Endothelial cell of umbilical vein (primary cell): ENCODE measurements at regions of chr14 and their contacts with region 1.

Region 1: DNA sequence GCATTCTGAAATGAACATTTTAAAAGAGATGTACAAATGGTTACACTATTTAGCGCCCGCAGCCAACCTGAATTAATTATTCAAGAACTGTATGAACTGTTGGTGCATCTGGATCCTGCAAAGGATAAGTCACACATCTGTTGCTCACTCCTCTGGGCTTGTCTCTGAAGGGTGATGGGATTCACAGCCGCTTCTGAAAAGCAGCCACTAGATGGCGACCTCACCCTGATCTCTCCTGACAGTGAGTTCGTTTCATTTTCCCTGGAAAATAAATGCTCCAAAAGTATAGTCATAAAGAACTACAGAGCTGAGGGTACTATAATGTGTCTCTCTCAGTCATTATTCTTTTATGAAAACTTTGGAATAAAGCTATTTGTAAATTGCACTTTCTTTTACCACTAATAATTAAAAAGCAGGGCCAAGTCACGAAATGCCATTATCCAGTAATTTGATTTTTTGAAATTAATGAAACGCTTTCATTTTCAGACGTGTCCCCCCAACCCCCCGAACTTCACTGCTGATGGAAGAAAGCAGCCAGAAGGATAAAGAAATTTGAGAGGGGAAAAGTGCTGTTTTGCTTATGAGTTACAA is 789.6 kb downstream of the NRXN3 start:
- DNase-seq: peak; percentile 74
- H3K4me3 ChIP-seq: no peak overlapping the region
- H3K27ac ChIP-seq: no peak overlapping the region
- H3K4me1 ChIP-seq: peaks cover 12% of the 10 kb centered on the region
- H3K27me3 ChIP-seq: no peaks in the 10 kb centered on the region
- CTCF ChIP-seq: peak; percentile 84 to 87
- POLR2A ChIP-seq: no peak

Region 2: DNA sequence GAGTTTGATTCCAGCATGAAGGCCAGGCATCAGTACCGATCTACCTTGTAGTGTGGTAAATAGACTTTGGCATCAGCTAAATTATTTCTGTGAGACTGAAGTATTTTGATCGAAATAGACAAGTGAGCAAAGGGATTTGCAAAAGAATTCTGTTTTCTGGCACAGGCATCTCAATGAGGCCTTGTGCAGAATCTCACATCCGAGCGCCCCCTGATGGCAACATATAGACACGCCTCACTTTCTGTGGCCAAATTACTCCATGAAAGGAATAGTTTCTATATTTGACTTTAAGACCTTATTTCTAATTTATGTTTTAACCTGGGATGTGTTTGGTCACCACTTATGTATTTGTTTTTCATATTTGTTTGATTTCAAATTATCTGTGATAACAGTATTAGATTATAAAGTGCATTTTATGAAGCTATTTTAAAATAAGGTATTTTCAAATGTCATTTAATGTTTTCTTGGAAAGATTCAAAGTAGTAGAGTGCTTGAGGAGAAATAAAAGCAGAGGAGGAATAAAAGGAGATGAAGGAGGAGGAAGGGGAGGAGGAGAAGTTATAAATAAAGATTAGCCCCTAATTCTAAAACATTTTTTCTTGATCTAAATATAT is 57.7 kb before region 1 on chr14:
- CTCF ChIA-PET with region 1: no interaction called
- POLR2A ChIA-PET with region 1: no interaction called
- dilution Hi-C with region 1: no loop called
- intact Hi-C with region 1: no loop called
- DNase-seq: peak; percentile 44
- H3K4me3 ChIP-seq: no peak overlapping the region
- H3K27ac ChIP-seq: no peak overlapping the region
- H3K4me1 ChIP-seq: no peaks in the 10 kb centered on the region
- H3K27me3 ChIP-seq: peaks cover 6 to 20% of the 10 kb centered on the region in 2 experiments
- CTCF ChIP-seq: peak; percentile 77
- POLR2A ChIP-seq: no peak

Region 3: GRCh38 chr14:78974691-78975090 is 14.9 kb after region 1 on chr14:
- CTCF ChIA-PET with region 1: interaction called, 18 read pairs
- POLR2A ChIA-PET with region 1: no interaction called
- dilution Hi-C with region 1: no loop called
- intact Hi-C with region 1: no loop called
- DNase-seq: peak; percentile 88
- H3K4me3 ChIP-seq: no peak overlapping the region
- H3K27ac ChIP-seq: peak overlapping the region; percentile 84
- H3K4me1 ChIP-seq: peaks cover 25% of the 10 kb centered on the region
- H3K27me3 ChIP-seq: no peaks in the 10 kb centered on the region
- CTCF ChIP-seq: no peak
- POLR2A ChIP-seq: no peak

Region 4: DNA sequence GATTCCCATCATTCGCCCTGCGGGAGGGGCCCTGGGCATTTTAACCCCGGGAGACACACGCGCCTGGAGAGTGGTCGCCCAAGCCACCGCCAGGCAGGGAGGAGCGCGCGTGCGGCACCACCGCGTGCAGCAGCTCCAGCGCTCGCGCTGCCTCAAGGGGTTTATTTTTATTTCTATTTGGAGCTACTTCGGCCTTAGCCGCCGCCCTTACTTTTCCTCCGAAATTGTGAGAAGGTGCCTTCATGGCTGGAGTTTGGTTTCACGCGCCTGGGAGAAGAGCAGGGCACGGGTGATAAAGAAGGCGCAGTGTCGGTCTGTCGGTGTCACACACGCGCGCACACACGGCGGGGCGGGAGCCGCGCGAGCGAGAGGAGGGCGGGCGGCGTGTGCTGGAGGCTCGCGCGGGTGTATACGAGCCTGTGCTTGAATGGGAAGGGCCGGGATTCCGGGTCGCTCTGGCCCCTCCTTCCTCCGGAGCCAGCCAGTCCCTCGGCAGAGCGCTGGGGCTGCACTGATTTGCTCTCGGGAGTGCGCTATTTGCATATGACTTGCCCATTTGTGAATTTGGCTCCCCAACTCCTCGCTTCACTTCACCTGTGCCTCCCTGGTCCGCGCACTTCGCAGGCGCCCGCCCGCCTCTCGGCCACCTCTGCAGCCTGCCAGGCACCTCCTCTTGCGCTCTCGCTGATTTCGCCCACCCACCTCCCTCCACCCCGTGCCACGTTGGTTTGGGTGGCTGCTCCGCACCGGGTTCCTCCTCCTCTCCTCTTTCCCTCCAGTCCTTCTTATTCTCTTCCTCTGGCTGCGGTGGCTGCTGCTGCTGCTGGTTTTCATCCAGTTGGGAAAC is 319.3 kb after region 1 on chr14:
- CTCF ChIA-PET with region 1: no interaction called
- POLR2A ChIA-PET with region 1: no interaction called
- dilution Hi-C with region 1: no loop called
- intact Hi-C with region 1: loop called (anchors 2 kb)
- DNase-seq: peak; percentile 83
- H3K4me3 ChIP-seq: peak overlapping the region; percentile 33 to 62 (median 34)
- H3K27ac ChIP-seq: no peak overlapping the region
- H3K4me1 ChIP-seq: peaks cover 7% of the 10 kb centered on the region
- H3K27me3 ChIP-seq: peaks cover 16 to 33% of the 10 kb centered on the region in 2 experiments
- CTCF ChIP-seq: no peak
- POLR2A ChIP-seq: no peak

Region 5: DNA sequence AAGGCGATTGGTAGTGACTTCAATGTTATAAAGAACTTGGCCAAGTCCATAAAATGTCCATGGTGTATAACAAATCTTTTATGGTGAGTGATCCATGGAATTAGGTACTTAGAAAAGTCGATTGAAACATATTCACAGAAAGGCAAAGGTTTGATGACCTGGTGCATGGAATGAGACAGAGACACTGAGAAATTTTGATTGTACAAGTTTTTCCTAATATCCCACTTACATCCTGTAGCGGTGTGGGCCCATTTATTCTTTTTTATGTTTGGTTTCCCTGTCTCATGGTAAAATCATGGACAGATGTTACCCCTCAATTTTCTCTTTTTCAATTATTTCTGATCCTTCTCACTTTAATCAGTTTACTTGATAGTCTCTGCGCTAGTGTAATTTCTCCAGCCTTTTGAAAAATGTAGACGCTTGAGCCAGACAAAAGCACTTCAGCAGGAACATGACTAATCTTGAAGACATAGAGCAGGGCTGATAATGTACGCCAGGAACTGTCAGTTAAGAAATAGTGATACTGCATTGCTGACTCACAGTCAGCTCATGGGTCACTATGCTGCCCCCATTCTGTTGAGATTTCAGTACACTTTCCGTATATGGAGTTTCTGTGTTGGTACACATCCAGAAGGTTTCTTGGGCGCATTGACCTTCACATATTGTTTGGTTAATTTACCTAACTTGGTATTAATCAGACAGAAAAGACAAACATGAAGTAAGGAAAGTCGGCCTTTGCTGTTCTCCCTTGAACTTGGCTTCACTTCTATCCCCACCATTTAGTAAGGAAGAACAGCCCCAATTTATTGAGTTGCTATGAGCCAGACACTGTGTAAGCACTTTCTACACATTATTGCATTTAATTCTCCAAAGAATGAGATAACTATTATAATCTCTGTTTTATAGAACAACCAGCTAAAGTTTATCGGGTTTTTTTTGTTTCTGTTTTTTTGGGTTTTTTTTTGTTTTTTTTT is 409.9 kb after region 1 on chr14:
- CTCF ChIA-PET with region 1: no interaction called
- POLR2A ChIA-PET with region 1: no interaction called
- dilution Hi-C with region 1: no loop called
- intact Hi-C with region 1: loop called (anchors 10 kb)
- DNase-seq: peak; percentile 88
- H3K4me3 ChIP-seq: no peak overlapping the region
- H3K27ac ChIP-seq: peak overlapping the region; percentile 53
- H3K4me1 ChIP-seq: peaks cover 6% of the 10 kb centered on the region
- H3K27me3 ChIP-seq: no peaks in the 10 kb centered on the region
- CTCF ChIP-seq: no peak
- POLR2A ChIP-seq: no peak

Region 6: DNA sequence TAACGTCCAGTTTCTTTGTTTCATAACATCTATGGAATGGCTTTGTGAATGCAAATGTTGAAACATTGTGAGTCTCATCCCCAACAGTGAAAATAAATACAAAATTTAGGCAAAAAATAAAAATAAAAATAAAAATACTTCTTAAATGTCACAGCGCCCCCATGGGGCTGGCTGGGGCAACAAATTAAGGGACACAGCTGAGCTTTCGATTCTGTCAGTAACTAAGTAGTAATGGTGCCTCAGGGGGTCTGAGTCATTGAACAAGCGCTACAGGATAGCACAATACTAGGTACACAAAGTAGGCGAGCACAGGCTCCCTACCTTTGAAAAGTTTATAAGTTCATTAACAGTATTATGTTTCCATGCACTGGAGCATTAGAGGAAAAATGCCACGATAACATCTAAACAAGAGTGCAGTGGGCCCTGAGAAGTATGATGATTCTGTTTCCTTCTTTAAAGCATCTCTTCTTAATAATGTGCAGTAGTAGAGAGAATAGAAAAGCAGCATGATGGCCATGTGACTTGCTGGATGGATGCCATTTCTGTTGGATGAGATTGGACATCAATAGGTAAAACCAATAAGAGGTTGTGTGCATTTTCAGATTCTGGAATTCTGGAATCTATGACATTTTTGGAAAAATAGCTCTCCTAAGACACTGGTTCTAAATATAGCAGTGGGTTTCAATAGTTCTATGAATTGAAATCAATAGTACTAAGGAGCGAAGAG is 584.4 kb after region 1 on chr14:
- CTCF ChIA-PET with region 1: interaction called, 27 read pairs
- POLR2A ChIA-PET with region 1: no interaction called
- dilution Hi-C with region 1: no loop called
- intact Hi-C with region 1: loop called (anchors 1 kb)
- DNase-seq: peak; percentile 10
- H3K4me3 ChIP-seq: no peak overlapping the region
- H3K27ac ChIP-seq: no peak overlapping the region
- H3K4me1 ChIP-seq: no peaks in the 10 kb centered on the region
- H3K27me3 ChIP-seq: no peaks in the 10 kb centered on the region
- CTCF ChIP-seq: peak; percentile 15 to 26
- POLR2A ChIP-seq: no peak

Region 7: GRCh38 chr14:80055667-80056496 is 1096.1 kb after region 1 on chr14:
- CTCF ChIA-PET with region 1: interaction called, 23 read pairs
- POLR2A ChIA-PET with region 1: no interaction called
- dilution Hi-C with region 1: no loop called
- intact Hi-C with region 1: no loop called
- DNase-seq: peak; percentile 47
- H3K4me3 ChIP-seq: no peak overlapping the region
- H3K27ac ChIP-seq: no peak overlapping the region
- H3K4me1 ChIP-seq: no peaks in the 10 kb centered on the region
- H3K27me3 ChIP-seq: no peaks in the 10 kb centered on the region
- CTCF ChIP-seq: peak; percentile 46 to 61
- POLR2A ChIP-seq: no peak

Region 8: DNA sequence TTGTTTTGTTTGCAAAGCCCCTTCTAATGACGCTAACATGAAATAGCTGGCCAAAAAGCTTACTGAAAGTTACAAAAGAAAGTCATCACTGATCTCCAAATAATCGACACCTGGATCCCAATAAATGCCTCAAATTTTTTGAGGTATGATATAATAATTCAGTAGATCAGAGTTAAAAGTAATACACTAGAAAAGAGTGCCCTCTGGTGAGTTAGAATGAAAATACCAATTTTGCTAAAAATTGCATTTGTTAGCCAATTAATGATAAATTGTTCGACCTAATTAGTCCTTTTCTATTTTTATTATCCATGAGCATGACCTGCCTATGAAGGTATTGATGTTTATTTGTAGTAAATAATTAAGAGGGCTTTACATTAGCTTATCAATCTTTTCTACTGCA is 1903.2 kb after region 1 on chr14:
- CTCF ChIA-PET with region 1: interaction called, 10 read pairs
- POLR2A ChIA-PET with region 1: no interaction called
- dilution Hi-C with region 1: no loop called
- intact Hi-C with region 1: no loop called
- DNase-seq: peak; percentile 12
- H3K4me3 ChIP-seq: no peak overlapping the region
- H3K27ac ChIP-seq: no peak overlapping the region
- H3K4me1 ChIP-seq: no peaks in the 10 kb centered on the region
- H3K27me3 ChIP-seq: no peaks in the 10 kb centered on the region
- CTCF ChIP-seq: peak in 1 of 2 donors; percentile 5
- POLR2A ChIP-seq: no peak